Endothelial cell of umbilical vein (primary cell): ENCODE measurements at regions of chr10 and their contacts with region 1.

Region 1: GRCh38 chr10:102009801-102010425 is 46.1 kb downstream of the ARMH3 start:
- DNase-seq: peak; percentile 83
- H3K4me3 ChIP-seq: no peak overlapping the region
- H3K27ac ChIP-seq: no peak overlapping the region
- H3K4me1 ChIP-seq: no peaks in the 10 kb centered on the region
- H3K27me3 ChIP-seq: no peaks in the 10 kb centered on the region
- CTCF ChIP-seq: peak; percentile 85 to 94
- POLR2A ChIP-seq: no peak

Region 2: DNA sequence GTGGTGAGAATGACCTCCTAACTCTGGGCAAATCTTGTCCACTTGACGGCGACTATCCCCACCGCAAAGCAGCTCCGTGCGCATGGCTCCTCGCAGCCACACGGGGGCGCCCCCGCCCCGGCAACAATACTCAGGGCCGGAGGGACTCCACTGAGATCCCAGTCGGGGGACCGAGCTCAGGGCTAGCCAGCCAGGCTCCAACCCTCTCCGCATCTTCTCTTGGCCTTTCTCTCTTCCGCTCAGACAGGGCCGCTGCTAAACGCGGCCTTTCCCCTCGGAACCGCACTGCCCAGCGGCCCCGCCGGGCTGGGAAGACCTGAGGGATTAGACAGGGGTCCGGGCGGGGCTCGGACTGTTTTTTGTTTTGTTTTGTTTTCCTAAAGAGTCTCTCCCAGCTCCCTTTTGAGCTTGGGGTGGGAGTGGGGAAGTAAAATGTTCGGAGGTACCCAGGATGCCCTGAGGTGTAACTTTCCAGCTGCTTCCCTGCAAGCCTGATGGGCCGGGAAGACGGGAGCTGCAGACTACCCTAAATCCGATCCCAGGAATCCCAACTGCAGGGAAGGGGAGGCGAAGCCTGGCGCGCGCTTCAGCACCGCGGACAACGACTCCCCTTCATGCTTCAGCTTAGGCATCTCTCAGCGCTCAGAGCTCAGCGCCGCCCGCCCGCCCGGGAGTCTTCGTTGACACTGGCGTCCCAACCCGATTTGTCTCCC is 169.0 kb before region 1 on chr10:
- CTCF ChIA-PET with region 1: interaction called, 742 read pairs
- POLR2A ChIA-PET with region 1: interaction called, 10 read pairs
- dilution Hi-C with region 1: no loop called
- intact Hi-C with region 1: loop called (anchors 1 kb)
- DNase-seq: peak; percentile 85
- H3K4me3 ChIP-seq: peak overlapping the region; percentile 17 to 45 (median 26)
- H3K27ac ChIP-seq: no peak overlapping the region
- H3K4me1 ChIP-seq: peaks cover 13% of the 10 kb centered on the region
- H3K27me3 ChIP-seq: no peaks in the 10 kb centered on the region
- CTCF ChIP-seq: peak; percentile 98 to 99
- POLR2A ChIP-seq: no peak

Region 3: DNA sequence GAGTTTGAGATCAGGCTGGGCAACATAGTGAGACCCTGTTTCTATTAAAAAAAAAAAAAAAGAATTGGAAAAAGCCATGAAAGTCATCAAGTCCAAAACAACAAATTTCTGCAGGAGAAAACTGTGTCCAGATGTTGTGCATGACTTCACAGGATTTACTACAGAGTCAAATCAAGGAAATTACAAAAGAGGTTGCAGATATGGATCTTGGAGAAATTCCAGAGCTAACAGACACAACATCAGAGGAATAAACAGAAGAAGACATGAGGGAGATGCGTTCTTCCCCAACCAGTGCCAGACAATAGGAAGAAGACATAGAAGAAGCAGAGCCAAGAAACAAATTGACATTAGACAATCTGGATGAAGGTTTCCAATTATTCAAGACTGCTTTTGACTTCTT is 142.0 kb before region 1 on chr10:
- CTCF ChIA-PET with region 1: interaction called, 14 read pairs
- POLR2A ChIA-PET with region 1: no interaction called
- dilution Hi-C with region 1: no loop called
- intact Hi-C with region 1: no loop called
- DNase-seq: no peak
- H3K4me3 ChIP-seq: no peak overlapping the region
- H3K27ac ChIP-seq: no peak overlapping the region
- H3K4me1 ChIP-seq: no peaks in the 10 kb centered on the region
- H3K27me3 ChIP-seq: no peaks in the 10 kb centered on the region
- CTCF ChIP-seq: no peak
- POLR2A ChIP-seq: no peak

Region 4: GRCh38 chr10:101901340-101901739 is 108.6 kb before region 1 on chr10:
- CTCF ChIA-PET with region 1: interaction called, 56 read pairs
- POLR2A ChIA-PET with region 1: interaction called, 6 read pairs
- dilution Hi-C with region 1: no loop called
- intact Hi-C with region 1: no loop called
- DNase-seq: no peak
- H3K4me3 ChIP-seq: no peak overlapping the region
- H3K27ac ChIP-seq: no peak overlapping the region
- H3K4me1 ChIP-seq: no peaks in the 10 kb centered on the region
- H3K27me3 ChIP-seq: no peaks in the 10 kb centered on the region
- CTCF ChIP-seq: no peak
- POLR2A ChIP-seq: no peak

Region 5: DNA sequence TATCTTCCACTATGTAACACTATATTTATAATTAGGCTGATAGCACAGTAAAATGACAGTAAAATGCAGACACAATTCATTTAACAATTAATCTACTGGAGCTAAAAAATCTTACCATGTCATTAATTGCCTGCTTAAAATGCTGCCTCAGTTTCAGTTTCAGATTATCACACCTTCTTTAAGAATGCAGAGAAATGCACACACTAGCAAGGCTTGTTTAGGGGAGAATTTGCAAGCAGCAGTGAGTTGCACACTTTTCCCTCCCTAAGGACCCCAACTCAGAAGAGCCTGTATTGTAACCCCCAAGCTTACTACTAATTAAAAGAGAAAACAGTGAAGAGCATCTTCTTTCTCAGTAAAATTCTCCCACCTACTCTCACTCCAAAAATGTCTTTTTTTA is 86.7 kb before region 1 on chr10:
- CTCF ChIA-PET with region 1: interaction called, 13 read pairs
- POLR2A ChIA-PET with region 1: no interaction called
- dilution Hi-C with region 1: no loop called
- intact Hi-C with region 1: no loop called
- DNase-seq: no peak
- H3K4me3 ChIP-seq: no peak overlapping the region
- H3K27ac ChIP-seq: no peak overlapping the region
- H3K4me1 ChIP-seq: no peaks in the 10 kb centered on the region
- H3K27me3 ChIP-seq: no peaks in the 10 kb centered on the region
- CTCF ChIP-seq: no peak
- POLR2A ChIP-seq: no peak

Region 6: GRCh38 chr10:101974091-101974971 is 35.6 kb before region 1 on chr10:
- CTCF ChIA-PET with region 1: interaction called, 12 read pairs
- POLR2A ChIA-PET with region 1: no interaction called
- dilution Hi-C with region 1: no loop called
- intact Hi-C with region 1: no loop called
- DNase-seq: peak; percentile 29
- H3K4me3 ChIP-seq: peak overlapping the region in 1 of 3 experiments; percentile 5
- H3K27ac ChIP-seq: peak overlapping the region; percentile 25
- H3K4me1 ChIP-seq: peaks cover 16% of the 10 kb centered on the region
- H3K27me3 ChIP-seq: no peaks in the 10 kb centered on the region
- CTCF ChIP-seq: no peak
- POLR2A ChIP-seq: no peak

Region 7: GRCh38 chr10:102055647-102056419 is 45.9 kb after region 1 on chr10 and contains the start of gene ARMH3:
- CTCF ChIA-PET with region 1: interaction called, 18 read pairs
- POLR2A ChIA-PET with region 1: no interaction called
- dilution Hi-C with region 1: no loop called
- intact Hi-C with region 1: no loop called
- DNase-seq: peak; percentile 97
- H3K4me3 ChIP-seq: peak within 1 kb of the TSS; percentile 30 to 90 (median 71)
- H3K27ac ChIP-seq: peak within 1 kb of the TSS; percentile 29
- H3K4me1 ChIP-seq: peaks cover 8% of the 10 kb centered on the region
- H3K27me3 ChIP-seq: no peaks in the 10 kb centered on the region
- CTCF ChIP-seq: no peak
- POLR2A ChIP-seq: peak; percentile 56
- total RNA-seq, gene ARMH3: 16.6 and 17.6 TPM in 2 replicates